WTC11 (cell line): ENCODE measurements at regions of chr10 and their contacts with region 1.

Region 1: DNA sequence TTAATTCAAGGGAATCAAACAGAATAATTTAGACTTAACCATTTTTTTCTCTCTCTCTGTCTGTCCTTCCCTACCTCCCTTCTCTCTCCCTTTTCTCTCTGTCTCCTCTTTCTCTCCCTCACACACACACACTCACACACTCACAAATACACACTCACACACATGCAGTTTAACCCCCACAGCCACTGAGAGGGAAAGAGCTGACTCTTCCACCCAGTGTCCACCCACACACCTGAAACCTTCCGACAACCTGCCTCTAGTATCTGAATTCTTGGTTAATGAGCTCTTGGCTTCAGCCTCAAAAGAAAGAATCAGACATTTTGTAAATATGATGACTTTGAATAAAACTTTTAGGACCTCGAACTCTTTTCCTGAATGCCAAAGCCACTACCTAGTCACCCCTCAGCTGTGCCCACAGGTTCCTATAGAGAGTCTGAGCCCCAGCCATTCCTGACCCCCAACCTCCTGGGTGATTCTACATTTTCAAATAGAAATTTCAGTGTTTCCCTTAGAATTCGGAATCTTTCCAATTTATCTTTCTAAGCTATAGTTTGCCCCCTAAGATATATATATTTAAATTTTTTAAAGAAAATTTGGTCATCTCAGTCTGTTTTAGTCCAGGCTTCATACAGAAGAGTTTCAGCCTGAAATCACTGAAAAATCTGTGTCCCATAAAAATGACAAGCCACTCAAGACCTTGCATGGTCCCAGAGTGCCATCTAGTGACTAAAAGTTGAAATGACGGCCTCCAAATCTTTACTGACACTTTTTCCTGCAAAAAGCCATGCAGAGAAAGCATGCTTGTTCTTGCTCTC is 202.8 kb downstream of the IPMK start:
- DNase-seq: peak; percentile 25
- ATAC-seq: peak; percentile 64
- H3K4me3 Mint-ChIP-seq: no peak overlapping the region
- H3K27ac Mint-ChIP-seq: 0 out of 2 replicates have a peak overlapping the region, but pooled peaks have one; percentile 17
- H3K4me1 Mint-ChIP-seq: peaks cover 39% of the 10 kb centered on the region
- H3K27me3 Mint-ChIP-seq: no peaks in the 10 kb centered on the region
- CTCF ChIP-seq: peak; percentile 74

Region 2: DNA sequence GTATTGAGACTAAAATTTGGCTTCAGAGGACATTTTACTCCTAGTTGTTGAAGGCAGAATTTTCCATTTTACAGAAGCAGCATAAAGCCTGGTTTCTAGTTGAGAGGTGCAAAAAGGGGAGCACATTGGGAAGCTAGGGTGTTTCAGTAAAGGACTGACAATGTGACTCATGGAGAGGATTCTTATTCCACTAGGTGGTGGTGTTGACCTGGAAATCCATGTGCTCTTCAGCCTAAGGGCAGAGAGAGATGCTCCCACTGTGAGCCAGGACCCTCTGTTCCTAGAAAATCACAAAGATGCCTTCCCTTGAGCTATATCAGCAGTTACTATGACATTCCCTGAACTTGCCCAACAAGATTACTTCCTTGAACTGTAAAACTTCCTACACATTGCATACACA is 485.0 kb before region 1 on chr10:
- CTCF ChIA-PET with region 1: interaction called, 19 read pairs
- POLR2A ChIA-PET with region 1: no interaction called
- DNase-seq: peak; percentile 36
- ATAC-seq: peak; percentile 99
- H3K4me3 Mint-ChIP-seq: no peak overlapping the region
- H3K27ac Mint-ChIP-seq: no peak overlapping the region
- H3K4me1 Mint-ChIP-seq: peaks cover 3% of the 10 kb centered on the region; the same call in 1 of the 2 replicates
- H3K27me3 Mint-ChIP-seq: no peaks in the 10 kb centered on the region; the same call in 1 of the 2 replicates
- CTCF ChIP-seq: peak; percentile 54

Region 3: GRCh38 chr10:57657164-57657765 is 407.7 kb before region 1 on chr10:
- CTCF ChIA-PET with region 1: interaction called, 14 read pairs
- POLR2A ChIA-PET with region 1: no interaction called
- DNase-seq: peak; percentile 68
- ATAC-seq: peak; percentile 98
- H3K4me3 Mint-ChIP-seq: no peak overlapping the region
- H3K27ac Mint-ChIP-seq: no peak overlapping the region
- H3K4me1 Mint-ChIP-seq: peaks cover 15% of the 10 kb centered on the region
- H3K27me3 Mint-ChIP-seq: no peaks in the 10 kb centered on the region
- CTCF ChIP-seq: peak; percentile 78; the same call in 1 of the 2 replicates